HEK293 (cell line): ENCODE measurements at regions of chr9 and their contacts with region 1.

Region 1: DNA sequence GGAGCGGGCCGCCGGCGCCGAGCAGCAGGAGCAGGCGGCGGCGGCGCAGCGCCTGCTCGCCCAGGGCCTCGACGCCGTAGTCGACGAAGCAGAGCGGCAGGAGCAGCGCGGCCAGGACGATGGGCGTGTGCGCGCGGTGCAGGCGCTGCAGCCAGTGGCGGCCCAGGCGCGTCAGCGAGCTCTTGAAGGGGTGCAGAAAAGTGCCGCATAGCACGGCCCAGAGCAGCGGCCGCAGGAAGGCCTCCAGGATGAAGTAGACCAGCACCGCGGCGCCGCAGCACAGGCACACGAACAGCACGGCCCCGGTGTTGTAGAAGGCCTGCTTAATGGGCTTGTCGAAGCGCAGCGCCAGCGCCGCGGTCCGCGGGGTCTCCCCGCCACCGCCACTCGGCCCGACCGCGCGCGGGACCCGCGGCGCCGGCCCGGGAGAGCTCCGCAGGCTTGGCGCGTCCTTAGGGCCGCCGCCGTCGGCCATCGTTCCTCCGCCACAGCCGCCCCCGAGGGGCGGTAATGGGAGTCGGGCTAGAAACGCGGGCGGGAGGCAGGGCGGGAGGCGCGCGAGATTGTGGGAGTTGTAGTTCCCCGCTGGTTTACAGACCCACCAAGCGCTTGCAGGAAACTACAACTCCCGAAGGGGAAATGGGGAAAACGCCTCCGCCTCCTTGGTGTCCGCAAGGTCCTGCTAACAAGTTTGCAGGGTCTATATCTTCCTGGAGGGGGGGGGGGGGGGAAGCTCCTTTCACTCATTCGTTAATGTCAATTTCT is at the start of gene TMEM245:
- H3K4me3 ChIP-seq: peak within 1 kb of the TSS; percentile 98
- H3K27ac ChIP-seq: peak within 1 kb of the TSS; percentile 92
- H3K4me1 ChIP-seq: no peaks in the 10 kb centered on the region
- CTCF ChIP-seq: no peak

Region 2: GRCh38 chr9:109012876-109013678 is 106.5 kb before region 1 on chr9 and contains the start of gene CTNNAL1:
- CTCF ChIA-PET with region 1: interaction called, 3 read pairs
- POLR2A ChIA-PET with region 1: interaction called, 13 read pairs
- H3K4me3 ChIP-seq: peak within 1 kb of the TSS; percentile 80
- H3K27ac ChIP-seq: peak within 1 kb of the TSS; percentile 85
- H3K4me1 ChIP-seq: peaks cover 9% of the 10 kb centered on the region; the same call in 1 of the 2 replicates
- CTCF ChIP-seq: no peak

Region 3: DNA sequence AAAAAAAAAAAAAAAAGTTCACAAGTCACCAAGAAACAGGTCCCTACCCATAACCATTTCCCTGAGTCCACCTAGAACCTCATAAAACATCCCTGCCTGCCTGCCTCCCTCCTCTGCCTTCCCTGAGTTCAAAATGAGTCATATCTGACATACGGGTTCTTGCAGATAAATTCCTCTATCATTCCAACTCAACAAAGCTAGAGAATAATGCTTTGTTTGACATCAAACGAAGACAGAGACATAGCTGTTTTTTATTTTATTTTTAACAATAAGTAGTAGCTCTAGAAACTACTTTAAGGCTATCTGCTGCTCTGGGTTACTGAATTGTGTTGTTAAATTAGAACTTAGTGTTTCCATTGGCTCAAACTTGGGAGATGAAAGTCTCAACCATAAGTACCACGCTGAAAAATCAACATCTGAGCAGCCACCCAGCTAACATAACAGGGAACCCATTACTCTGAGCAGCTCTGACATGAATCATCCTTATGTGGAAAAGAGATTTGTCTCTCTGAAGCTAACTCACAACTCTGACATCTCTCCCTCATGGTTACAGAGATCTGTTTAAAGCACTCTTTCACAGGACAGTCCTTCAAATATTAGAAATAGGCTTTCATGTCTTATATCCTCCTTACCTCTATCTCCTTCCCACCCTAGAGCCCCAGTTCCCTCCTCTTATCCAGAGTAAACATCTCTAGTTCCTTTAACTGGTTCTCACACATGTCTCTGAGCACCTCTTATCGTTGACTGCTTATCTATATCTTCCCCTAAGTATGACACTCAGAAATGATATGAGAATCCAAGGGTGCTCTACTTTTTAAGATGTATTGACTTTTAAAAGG is 12.0 kb before region 1 on chr9:
- CTCF ChIA-PET with region 1: interaction called, 4 read pairs
- POLR2A ChIA-PET with region 1: interaction called, 32 read pairs
- H3K4me3 ChIP-seq: no peak overlapping the region
- H3K27ac ChIP-seq: no peak overlapping the region
- H3K4me1 ChIP-seq: peaks cover 17% of the 10 kb centered on the region
- CTCF ChIP-seq: no peak

Region 4: DNA sequence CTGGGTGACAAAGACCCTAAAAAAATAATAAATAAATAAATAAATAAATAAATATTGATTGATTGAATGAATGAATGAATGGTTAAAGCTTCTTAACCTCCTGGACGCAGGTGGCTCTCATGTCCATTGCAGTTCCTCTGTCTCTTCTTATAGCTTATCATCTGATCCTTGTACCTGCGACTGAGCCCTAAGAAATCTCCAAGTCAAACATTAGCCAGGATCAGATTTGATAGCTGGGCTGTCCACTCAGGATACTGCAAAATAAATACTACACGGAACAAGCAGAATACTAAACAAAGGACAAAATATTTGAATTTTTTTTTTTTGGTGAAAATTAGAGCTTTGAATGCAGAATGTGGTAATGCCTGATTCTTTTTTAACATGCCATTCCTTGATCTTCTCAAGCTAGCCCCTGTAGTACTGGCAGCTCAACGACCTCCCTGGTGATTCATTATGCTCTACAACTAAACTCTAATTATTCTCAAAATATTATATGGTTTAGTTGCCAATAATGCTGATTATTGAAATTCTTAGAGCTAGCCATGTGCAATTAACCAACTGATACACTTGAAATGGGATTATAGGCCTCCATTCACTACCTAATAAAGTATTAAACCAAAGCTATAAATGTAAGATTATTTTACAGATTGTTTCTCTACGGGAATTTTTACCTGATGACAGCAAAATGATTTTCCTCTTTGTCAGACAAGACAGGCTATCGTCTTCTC is 10.0 kb after region 1 on chr9:
- CTCF ChIA-PET with region 1: no interaction called
- POLR2A ChIA-PET with region 1: interaction called, 10 read pairs
- H3K4me3 ChIP-seq: no peak overlapping the region
- H3K27ac ChIP-seq: no peak overlapping the region
- H3K4me1 ChIP-seq: no peaks in the 10 kb centered on the region
- CTCF ChIP-seq: no peak